ENCODE measurements at regions of chr20 and their contacts with region 1.

Region 1: DNA sequence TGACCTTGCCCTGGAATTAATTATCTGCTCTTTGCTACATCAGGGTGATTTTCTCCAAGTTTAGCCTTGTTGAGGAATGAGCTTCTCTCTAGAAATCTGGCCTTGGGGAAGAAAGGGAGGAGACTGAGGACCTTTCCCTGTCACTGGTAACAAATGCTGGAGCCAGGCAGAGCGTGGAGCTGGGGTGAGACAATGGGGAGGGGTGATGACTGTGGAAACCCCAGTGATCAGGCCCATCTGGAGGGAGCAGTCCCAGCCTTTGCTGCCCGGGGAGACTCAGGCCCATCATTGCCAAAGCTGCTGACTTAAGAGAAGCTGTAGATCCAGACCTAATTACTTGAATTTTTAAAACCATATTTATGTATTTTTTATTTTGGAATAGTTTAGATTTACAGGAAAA is 31.3 kb downstream of the BCAS4 start:
- DNase-seq: no peak
- ATAC-seq: no peak
- H3K4me3 ChIP-seq: no peak overlapping the region
- H3K27ac ChIP-seq: no peak overlapping the region
- H3K4me1 ChIP-seq: peaks cover 10% of the 10 kb centered on the region
- H3K27me3 ChIP-seq: no peaks in the 10 kb centered on the region
- CTCF ChIP-seq: no peak
- EP300 ChIP-seq: no peak
- POLR2A ChIP-seq: no peak
- RAD21 ChIP-seq: no peak

Region 2: DNA sequence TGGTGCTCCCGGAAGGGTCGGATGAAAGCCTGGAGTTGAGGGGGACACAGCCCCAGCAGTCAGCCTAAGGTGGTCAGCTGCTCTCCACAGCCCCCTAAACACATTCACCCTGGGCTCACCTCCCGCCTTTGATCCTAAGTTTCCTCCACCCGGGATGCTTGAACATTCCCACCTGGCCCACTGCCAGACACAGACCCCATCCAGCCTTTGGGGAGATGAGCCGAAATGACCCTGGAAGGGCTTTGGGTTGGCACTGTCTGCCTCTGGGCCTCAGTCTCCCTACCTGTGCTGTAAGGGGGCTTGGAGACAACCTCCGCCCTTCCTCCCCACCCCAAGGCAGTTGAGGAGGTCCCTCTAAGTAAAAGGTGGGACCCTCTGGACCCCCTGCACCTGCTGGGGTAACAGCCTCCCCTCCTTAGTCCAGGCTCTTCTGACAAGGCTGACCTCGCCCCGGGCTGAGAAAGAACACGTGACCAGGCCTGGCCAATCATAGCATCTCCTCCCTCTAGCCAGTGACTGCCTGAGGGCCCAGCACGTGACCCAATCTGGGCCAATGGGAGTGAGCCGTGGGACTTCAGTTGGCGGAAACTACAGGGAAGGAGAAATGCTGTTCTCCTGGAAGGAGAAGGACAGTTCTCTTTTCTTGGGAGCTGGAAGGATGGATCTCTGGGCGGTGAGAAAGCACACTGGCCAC is 696.3 kb before region 1 on chr20:
- CTCF ChIA-PET with region 1: no interaction called
- POLR2A ChIA-PET with region 1: no interaction called
- in situ Hi-C with region 1: no loop called
- intact Hi-C with region 1: loop called (anchors 5 kb)
- DNase-seq: no peak
- ATAC-seq: peak; percentile 9; the same call in 2 of the 3 replicates
- H3K4me3 ChIP-seq: no peak overlapping the region
- H3K27ac ChIP-seq: no peak overlapping the region
- H3K4me1 ChIP-seq: peaks cover 7% of the 10 kb centered on the region
- H3K27me3 ChIP-seq: no peaks in the 10 kb centered on the region
- CTCF ChIP-seq: no peak
- EP300 ChIP-seq: no peak
- POLR2A ChIP-seq: no peak
- RAD21 ChIP-seq: no peak

Region 3: GRCh38 chr20:50546729-50547314 is 279.3 kb before region 1 on chr20:
- CTCF ChIA-PET with region 1: no interaction called
- POLR2A ChIA-PET with region 1: no interaction called
- in situ Hi-C with region 1: no loop called
- intact Hi-C with region 1: no loop called
- DNase-seq: no peak
- ATAC-seq: peak; percentile 42; the same call in 2 of the 3 replicates
- H3K4me3 ChIP-seq: no peak overlapping the region
- H3K27ac ChIP-seq: no peak overlapping the region
- H3K4me1 ChIP-seq: peaks cover 20% of the 10 kb centered on the region
- H3K27me3 ChIP-seq: no peaks in the 10 kb centered on the region
- CTCF ChIP-seq: no peak
- EP300 ChIP-seq: no peak
- POLR2A ChIP-seq: no peak
- RAD21 ChIP-seq: no peak

Measured in HepG2 (cell line).